ENCODE measurements at regions of chrX and their contacts with region 1.

Region 1: GRCh38 chrX:22445880-22446279 is 173.2 kb downstream of the CBLL2 start:
- DNase-seq: no peak
- H3K4me3 ChIP-seq: no peak overlapping the region
- CTCF ChIP-seq: no peak
- POLR2A ChIP-seq: no peak

Region 2: GRCh38 chrX:21940356-21940829 is 505.5 kb before region 1 on chrX and contains the start of gene SMS:
- intact Hi-C with region 1: no loop called
- DNase-seq: peak; percentile 49 to 93
- H3K4me3 ChIP-seq: peak within 1 kb of the TSS; percentile 32
- CTCF ChIP-seq: no peak
- POLR2A ChIP-seq: no peak
- total RNA-seq, gene SMS: 20.2 to 30.6 (median 24.0) TPM

Region 3: GRCh38 chrX:22220941-22221340 is 224.9 kb before region 1 on chrX:
- intact Hi-C with region 1: loop called (anchors 10 kb)
- DNase-seq: no peak
- H3K4me3 ChIP-seq: no peak overlapping the region
- CTCF ChIP-seq: no peak
- POLR2A ChIP-seq: no peak

Region 4: GRCh38 chrX:22969411-22969810 is 523.5 kb after region 1 on chrX:
- intact Hi-C with region 1: no loop called
- DNase-seq: no peak
- H3K4me3 ChIP-seq: no peak overlapping the region
- CTCF ChIP-seq: no peak
- POLR2A ChIP-seq: no peak